ENCODE measurements at regions of chr19 and their contacts with region 1.

Region 1: DNA sequence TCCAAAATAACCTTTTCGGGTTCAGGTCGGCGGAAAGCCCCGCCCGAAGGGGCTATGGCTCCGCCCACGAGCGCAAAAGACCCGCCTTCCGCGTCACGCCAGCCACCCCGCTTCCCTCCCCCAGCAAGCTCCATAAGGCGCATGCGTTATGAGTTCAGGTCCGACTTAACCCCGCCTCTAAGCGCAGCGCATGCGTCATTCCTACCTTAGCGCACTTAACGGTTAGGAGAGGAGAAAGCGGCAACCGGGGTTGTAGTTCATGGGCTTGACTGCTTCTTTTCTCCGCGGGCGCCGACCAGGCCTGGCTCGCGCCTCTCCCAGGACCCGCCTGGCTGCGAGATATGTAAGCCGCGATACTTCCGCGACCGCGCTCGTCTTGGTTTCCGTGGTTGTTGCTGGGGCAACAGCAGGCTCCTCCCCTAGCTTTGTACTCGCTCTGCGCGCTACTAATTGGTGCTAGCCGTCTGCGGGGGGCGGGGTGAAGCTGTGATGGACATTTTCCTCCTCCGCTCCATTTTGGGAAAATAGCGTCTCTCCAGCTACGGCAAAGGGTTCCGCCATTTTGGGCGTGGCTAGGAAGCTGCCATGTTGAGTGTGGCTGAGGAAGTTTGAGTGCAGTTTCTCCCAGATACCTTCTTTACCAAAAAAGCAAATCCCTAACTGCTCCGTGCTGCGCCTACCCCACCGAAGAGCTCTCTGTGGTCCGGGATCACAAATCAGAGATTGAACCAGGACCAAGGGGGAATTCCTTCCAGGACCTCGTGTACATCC is at the start of gene B9D2:
- DNase-seq: peak; percentile 99
- H3K4me3 Mint-ChIP-seq: peak within 1 kb of the TSS; percentile 91
- H3K27ac Mint-ChIP-seq: peak within 1 kb of the TSS; percentile 92
- H3K4me1 Mint-ChIP-seq: peaks cover 15% of the 10 kb centered on the region
- H3K27me3 Mint-ChIP-seq: no peaks in the 10 kb centered on the region
- total RNA-seq, gene B9D2: 4.7 to 5.1 TPM

Region 2: DNA sequence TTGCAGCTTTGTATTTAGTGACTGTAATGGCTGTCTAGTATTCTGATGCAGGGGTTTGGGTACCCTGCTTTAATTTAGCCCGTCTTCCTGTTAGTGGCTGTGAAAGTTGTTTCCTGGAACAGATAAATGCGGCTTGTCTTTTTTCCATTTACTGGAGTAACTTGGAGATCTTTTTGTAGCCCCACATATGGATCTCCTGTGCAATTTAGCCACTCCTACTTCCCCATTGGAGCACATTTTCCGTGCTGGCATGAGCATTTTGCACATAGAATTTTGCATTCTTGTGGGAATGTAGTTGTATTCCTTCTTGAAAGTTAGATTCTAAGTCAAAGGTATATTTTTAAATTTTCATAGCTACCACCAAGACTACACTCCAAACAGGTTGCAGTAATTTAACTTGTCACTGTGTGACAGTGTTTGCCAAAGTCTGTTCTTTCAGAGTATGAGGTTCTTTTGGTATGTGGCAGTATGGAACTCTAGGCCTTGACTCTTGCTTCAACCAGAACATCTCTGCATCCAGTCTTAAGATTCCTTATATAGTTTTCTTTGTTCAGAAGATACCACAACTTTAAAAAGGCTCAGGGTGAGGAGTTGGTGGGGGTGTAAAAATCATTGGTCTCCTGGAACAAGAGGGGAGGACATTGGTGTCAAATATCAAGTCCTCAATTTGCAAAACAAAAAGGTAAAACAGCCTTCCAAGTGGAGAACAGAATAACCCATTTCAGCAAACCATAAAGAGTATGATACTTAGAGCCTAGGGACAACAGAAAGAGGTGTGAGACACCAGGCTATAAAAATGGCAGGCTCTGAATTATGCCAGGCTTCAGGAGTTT is 75.0 kb before region 1 on chr19:
- CTCF ChIA-PET with region 1: no interaction called
- POLR2A ChIA-PET with region 1: no interaction called
- intact Hi-C with region 1: no loop called
- DNase-seq: no peak
- H3K4me3 Mint-ChIP-seq: no peak overlapping the region
- H3K27ac Mint-ChIP-seq: peak overlapping the region; percentile 38
- H3K4me1 Mint-ChIP-seq: peaks cover 3% of the 10 kb centered on the region
- H3K27me3 Mint-ChIP-seq: no peaks in the 10 kb centered on the region

Region 3: GRCh38 chr19:41397086-41398049 is 33.4 kb after region 1 on chr19 and contains the starts of genes BCKDHA and EXOSC5:
- CTCF ChIA-PET with region 1: interaction called, 3 read pairs
- POLR2A ChIA-PET with region 1: no interaction called
- intact Hi-C with region 1: loop called (anchors 1 kb)
- DNase-seq: peak; percentile 99
- H3K4me3 Mint-ChIP-seq: peak within 1 kb of the TSS; percentile 96
- H3K27ac Mint-ChIP-seq: peak within 1 kb of the TSS; percentile 98
- H3K4me1 Mint-ChIP-seq: peaks cover 41% of the 10 kb centered on the region
- H3K27me3 Mint-ChIP-seq: no peaks in the 10 kb centered on the region
- total RNA-seq, gene BCKDHA: 17.4 to 23.2 TPM
- total RNA-seq, gene EXOSC5: 43.0 to 45.5 TPM

Region 4: DNA sequence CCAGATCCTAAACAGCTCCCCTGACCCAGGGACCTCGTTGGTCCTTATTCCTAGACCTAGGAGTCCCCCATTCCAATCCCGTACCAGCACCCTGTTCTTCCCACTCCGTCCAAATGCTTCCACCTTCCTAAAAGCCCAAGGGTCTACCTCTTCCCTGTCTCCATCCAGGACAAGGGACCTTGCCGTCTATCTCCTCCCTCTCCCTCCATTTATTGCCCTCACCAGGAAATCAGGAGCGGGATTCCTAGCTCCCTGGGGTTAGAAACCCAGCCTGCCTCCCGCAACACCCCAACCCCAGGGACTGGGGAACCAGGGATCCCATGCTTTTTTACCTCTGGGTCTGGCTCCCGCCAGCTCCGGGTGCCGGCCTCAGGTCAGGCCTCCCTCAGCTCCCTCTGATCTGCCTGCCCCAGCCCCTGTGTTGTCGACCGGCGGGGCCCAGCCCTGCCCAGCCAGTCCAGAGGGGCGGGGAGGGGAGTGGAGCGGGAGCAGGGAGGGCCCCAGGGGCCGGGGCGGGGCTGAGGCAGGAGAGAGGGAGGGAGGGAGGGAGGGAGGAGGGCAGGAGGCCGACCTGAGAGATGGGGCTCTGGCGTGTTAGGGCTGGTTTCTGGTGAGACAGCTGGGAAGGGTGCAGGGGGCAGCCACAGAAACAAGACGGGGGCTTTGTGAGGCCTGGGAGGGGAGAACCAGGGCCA is 63.2 kb after region 1 on chr19 and contains the start of gene B3GNT8:
- CTCF ChIA-PET with region 1: no interaction called
- POLR2A ChIA-PET with region 1: no interaction called
- intact Hi-C with region 1: no loop called
- DNase-seq: peak; percentile 67
- H3K4me3 Mint-ChIP-seq: peak within 1 kb of the TSS; percentile 67
- H3K27ac Mint-ChIP-seq: peak within 1 kb of the TSS; percentile 85
- H3K4me1 Mint-ChIP-seq: peaks cover 21% of the 10 kb centered on the region
- H3K27me3 Mint-ChIP-seq: no peaks in the 10 kb centered on the region
- total RNA-seq, gene B3GNT8: 0.55 to 0.68 TPM

Region 5: DNA sequence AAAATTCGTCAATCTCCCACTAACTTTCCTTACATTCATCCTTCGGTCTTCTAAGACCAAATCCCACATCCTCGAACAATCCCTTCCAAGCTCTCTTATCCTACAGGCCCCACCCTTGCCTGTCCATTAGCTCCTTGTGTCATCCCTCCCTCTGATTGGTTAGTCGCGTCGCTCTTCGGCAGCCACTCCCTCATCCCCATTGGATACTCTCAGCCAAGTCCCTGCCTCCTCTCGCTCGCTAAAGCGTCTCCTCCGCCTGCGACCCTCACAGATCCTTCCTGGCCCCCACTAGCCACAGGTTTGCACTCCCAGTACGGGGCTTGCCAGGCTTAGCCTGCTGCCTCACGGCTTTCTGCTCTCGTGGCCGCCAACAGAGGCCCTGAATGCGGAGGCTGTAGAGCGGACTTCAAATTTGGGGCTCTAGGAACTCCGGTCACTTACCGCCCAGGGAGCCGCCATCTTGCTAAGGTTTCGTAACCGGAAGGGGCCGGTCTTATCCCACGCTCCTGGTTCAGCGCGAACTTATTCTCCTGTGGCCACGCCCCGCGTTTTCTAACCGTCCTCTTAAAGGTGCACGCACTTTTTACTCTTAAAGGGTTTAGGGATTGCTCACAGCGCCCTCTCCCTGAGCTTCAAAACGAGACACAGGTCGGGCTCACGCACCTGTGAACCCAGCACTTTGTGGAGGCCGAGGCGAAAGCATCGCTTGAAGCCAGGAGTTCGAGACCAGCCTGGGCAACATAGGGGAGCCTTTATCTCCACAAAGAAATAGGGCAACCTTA is 75.7 kb after region 1 on chr19 and contains the start of gene DMAC2:
- CTCF ChIA-PET with region 1: interaction called, 15 read pairs
- POLR2A ChIA-PET with region 1: interaction called, 5 read pairs
- intact Hi-C with region 1: no loop called
- DNase-seq: peak; percentile 98
- H3K4me3 Mint-ChIP-seq: no peak within 1 kb of the TSS
- H3K27ac Mint-ChIP-seq: no peak within 1 kb of the TSS
- H3K4me1 Mint-ChIP-seq: peaks cover 15% of the 10 kb centered on the region
- H3K27me3 Mint-ChIP-seq: no peaks in the 10 kb centered on the region
- total RNA-seq, gene DMAC2: 47.5 to 47.8 TPM

Region 6: GRCh38 chr19:42075616-42076379 is 711.9 kb after region 1 on chr19 and contains the start of gene ZNF574:
- CTCF ChIA-PET with region 1: no interaction called
- POLR2A ChIA-PET with region 1: no interaction called
- intact Hi-C with region 1: loop called (anchors 5 kb)
- DNase-seq: peak; percentile 99
- H3K4me3 Mint-ChIP-seq: peak within 1 kb of the TSS; percentile 99
- H3K27ac Mint-ChIP-seq: peak within 1 kb of the TSS; percentile 99
- H3K4me1 Mint-ChIP-seq: peaks cover 35% of the 10 kb centered on the region
- H3K27me3 Mint-ChIP-seq: no peaks in the 10 kb centered on the region
- total RNA-seq, gene ZNF574: 12.2 to 13.2 TPM

Measured in activated CD4-positive, alpha-beta memory T cell treated with anti-CD3 and anti-CD28 coated beads for 36 hours (primary cell).